Posterior vena cava (tissue), 2 donors: ENCODE measurements at regions of chr2 and their contacts with region 1.

Region 1: DNA sequence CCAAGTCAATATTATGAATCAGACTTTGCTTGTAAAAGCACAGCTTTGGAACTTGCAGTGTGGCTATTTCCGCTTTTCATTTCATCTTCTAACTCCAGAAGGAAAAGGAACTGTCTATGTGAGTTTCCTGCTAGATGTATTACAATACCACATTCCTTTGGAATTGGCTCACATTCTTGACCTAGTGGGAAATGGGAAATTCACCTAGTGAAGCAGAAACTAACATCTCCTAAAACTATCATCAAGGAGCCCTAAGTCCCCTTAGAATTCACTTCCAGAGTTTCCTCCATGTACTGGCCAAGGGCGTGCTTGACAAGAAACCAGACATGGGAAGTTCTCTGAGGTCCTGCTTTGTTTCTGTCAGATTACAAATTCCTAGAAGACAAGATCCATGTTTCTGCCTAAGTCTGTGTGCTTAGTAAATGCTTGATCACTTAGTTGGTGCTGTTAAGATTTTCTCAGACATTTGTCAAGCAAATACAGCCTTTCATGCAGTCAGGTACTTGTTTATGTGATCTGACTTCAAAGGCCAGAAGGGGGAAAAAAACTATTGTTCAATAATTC is 275.7 kb upstream of the FN1 start:
- DNase-seq: no peak

Region 2: GRCh38 chr2:215698566-215698965 is 13.0 kb before region 1 on chr2:
- intact Hi-C with region 1: loop called in 1 of 2 experiments (anchors 1 kb)
- DNase-seq: no peak